Mammary epithelial cell (primary cell): ENCODE measurements at regions of chr6 and their contacts with region 1.

Region 1: GRCh38 chr6:12289933-12290820 is at the start of gene EDN1:
- DNase-seq: peak; percentile 84
- H3K4me3 ChIP-seq: peak within 1 kb of the TSS; percentile 54 to 96 (median 60)
- H3K27ac ChIP-seq: peak within 1 kb of the TSS; percentile 84
- H3K4me1 ChIP-seq: peaks cover 39% of the 10 kb centered on the region
- H3K27me3 ChIP-seq: no peaks in the 10 kb centered on the region
- CTCF ChIP-seq: peak; percentile 22 to 68
- total RNA-seq, gene EDN1: 8.9 to 11.3 TPM

Region 2: DNA sequence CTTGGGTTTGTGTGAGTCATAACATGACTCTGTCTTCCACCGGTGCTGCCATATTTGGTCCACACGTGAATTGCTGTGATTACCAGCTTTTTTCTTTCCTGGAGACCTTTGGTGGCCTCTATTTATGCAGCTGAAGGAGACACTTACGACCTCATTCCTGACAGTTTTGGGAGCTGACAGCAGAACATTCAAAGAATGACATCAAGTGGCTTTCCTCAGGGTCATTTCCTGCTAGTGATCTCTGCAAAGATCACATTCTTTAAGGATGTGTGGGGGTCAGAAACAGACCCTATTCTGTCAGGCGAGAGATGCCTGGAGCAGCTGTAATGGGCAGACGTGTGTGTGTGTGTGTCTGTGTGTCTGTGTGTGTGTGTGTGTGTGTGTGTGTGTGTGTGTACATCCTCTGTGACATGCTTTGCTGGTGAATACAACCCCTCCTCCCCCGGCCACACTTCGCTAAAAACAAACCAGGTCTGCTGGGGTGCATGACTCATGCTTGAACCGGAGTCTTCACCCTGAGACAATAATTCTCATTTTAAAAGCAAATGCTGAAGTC is 637.1 kb before region 1 on chr6:
- CTCF ChIA-PET with region 1: interaction called, 7 read pairs
- dilution Hi-C with region 1: no loop called
- in situ Hi-C with region 1: no loop called
- intact Hi-C with region 1: loop called (anchors 1 kb)
- DNase-seq: peak; percentile 60
- H3K4me3 ChIP-seq: no peak overlapping the region
- H3K27ac ChIP-seq: no peak overlapping the region
- H3K4me1 ChIP-seq: peaks cover 8% of the 10 kb centered on the region
- H3K27me3 ChIP-seq: no peaks in the 10 kb centered on the region
- CTCF ChIP-seq: no peak

Region 3: GRCh38 chr6:12150812-12151432 is 139.3 kb before region 1 on chr6:
- CTCF ChIA-PET with region 1: no interaction called
- dilution Hi-C with region 1: no loop called
- in situ Hi-C with region 1: no loop called
- intact Hi-C with region 1: loop called (anchors 1 kb)
- DNase-seq: no peak
- H3K4me3 ChIP-seq: no peak overlapping the region
- H3K27ac ChIP-seq: no peak overlapping the region
- H3K4me1 ChIP-seq: peaks cover 13% of the 10 kb centered on the region
- H3K27me3 ChIP-seq: no peaks in the 10 kb centered on the region
- CTCF ChIP-seq: peak; percentile 56 to 81

Region 4: GRCh38 chr6:12324514-12325147 is 34.5 kb after region 1 on chr6:
- CTCF ChIA-PET with region 1: interaction called, 3 read pairs
- dilution Hi-C with region 1: no loop called
- in situ Hi-C with region 1: no loop called
- intact Hi-C with region 1: loop called (anchors 1 kb)
- DNase-seq: no peak
- H3K4me3 ChIP-seq: no peak overlapping the region
- H3K27ac ChIP-seq: peak overlapping the region; percentile 99
- H3K4me1 ChIP-seq: peaks cover 50% of the 10 kb centered on the region
- H3K27me3 ChIP-seq: no peaks in the 10 kb centered on the region
- CTCF ChIP-seq: no peak

Region 5: DNA sequence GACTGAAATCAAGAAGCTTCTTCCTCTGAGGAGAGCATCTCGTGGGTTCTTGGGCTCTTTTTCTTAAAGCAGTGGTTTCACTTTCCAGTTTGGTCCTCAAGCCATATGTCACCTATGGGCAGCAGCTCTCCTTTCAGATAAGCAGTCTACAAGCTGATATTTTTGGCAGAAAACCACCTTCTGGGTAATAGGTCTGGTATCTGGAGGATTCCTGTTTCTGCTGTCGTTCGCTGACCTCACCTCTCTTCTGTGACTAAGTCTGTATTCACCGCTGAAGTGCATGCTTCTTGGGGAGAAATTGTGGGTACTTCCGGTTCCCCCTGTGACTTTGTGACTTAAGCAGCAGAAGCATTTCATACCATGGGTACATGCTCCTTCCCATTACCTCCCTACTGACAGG is 193.5 kb after region 1 on chr6:
- CTCF ChIA-PET with region 1: no interaction called
- dilution Hi-C with region 1: loop called (anchors 10 kb)
- in situ Hi-C with region 1: loop called in 1 of 2 experiments (anchors 10 kb)
- intact Hi-C with region 1: no loop called
- DNase-seq: peak; percentile 91
- H3K4me3 ChIP-seq: no peak overlapping the region
- H3K27ac ChIP-seq: peak overlapping the region; percentile 74
- H3K4me1 ChIP-seq: peaks cover 30% of the 10 kb centered on the region
- H3K27me3 ChIP-seq: no peaks in the 10 kb centered on the region
- CTCF ChIP-seq: no peak

Region 6: GRCh38 chr6:12605888-12606345 is 315.7 kb after region 1 on chr6:
- CTCF ChIA-PET with region 1: interaction called, 7 read pairs
- dilution Hi-C with region 1: no loop called
- in situ Hi-C with region 1: no loop called
- intact Hi-C with region 1: loop called (anchors 1 kb)
- DNase-seq: peak; percentile 61
- H3K4me3 ChIP-seq: no peak overlapping the region
- H3K27ac ChIP-seq: no peak overlapping the region
- H3K4me1 ChIP-seq: peaks cover 5% of the 10 kb centered on the region
- H3K27me3 ChIP-seq: no peaks in the 10 kb centered on the region
- CTCF ChIP-seq: peak; percentile 74 to 77